CD4-positive, alpha-beta memory T cell (primary cell): ENCODE measurements at regions of chr2 and their contacts with region 1.

Region 1: GRCh38 chr2:165953655-165954606 is at the start of gene TTC21B:
- DNase-seq: peak; percentile 93 to 96 (median 94)
- H3K4me3 ChIP-seq: peak within 1 kb of the TSS; percentile 70 to 80
- H3K4me3 Mint-ChIP-seq: peak within 1 kb of the TSS in 4 of 8 donors; percentile 17 to 60 (median 47)
- H3K27ac ChIP-seq: peak within 1 kb of the TSS; percentile 79
- H3K27ac Mint-ChIP-seq: peak within 1 kb of the TSS in 3 of 7 donors; percentile 13 to 42 (median 36)
- H3K4me1 ChIP-seq: peaks cover 41% of the 10 kb centered on the region
- H3K4me1 Mint-ChIP-seq: peaks cover 7 to 19% (median 14%) of the 10 kb centered on the region in 4 donors
- H3K27me3 ChIP-seq: no peaks in the 10 kb centered on the region
- H3K27me3 Mint-ChIP-seq: no peaks in the 10 kb centered on the region
- total RNA-seq, gene TTC21B: 25.6 to 30.4 TPM

Region 2: DNA sequence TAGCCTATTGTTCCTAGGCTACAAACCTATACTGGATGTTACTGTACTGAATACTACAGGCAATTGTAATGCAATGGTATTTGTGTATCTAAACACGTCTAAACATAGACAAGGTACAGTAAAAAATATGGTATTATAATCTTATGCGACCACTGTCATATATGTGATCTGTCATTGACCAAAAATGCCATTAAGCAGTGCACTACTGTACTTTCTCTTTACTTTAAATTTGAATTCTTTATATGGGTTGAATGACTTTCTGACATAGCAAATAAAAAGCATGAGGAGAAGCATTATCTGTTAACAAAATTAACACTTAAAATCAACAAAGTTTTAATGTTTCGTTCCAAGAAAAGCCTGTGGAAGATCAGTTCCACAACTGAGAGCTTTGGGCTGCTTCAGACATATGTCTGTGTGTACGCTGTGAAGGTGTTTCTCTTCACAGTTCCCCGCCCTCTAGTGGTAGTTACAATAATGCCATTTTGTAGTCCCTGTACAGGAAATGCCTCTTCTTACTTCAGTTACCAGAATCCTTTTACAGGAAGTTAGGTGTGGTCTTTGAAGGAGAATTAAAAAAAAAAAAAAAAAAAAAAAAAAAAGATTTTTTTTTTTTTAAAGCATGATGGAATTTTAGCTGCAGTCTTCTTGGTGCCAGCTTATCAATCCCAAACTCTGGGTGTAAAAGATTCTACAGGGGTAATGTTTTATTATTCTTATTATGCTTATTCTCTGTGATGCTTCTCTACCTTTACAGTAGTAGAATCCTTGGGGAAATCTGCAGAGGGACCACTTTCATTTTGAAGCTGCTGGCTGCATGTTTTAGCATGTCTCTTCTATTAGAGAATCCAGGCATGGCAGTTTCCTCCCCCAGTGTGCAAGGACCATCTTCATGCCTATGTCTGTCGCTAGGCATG is 660.2 kb before region 1 on chr2:
- CTCF ChIA-PET with region 1: no interaction called
- POLR2A ChIA-PET with region 1: no interaction called
- intact Hi-C with region 1: loop called (anchors 10 kb)
- DNase-seq: peak; percentile 68 to 83 (median 75)
- H3K4me3 ChIP-seq: no peak overlapping the region
- H3K4me3 Mint-ChIP-seq: peak overlapping the region in 1 of 8 donors; percentile 11
- H3K27ac ChIP-seq: no peak overlapping the region
- H3K27ac Mint-ChIP-seq: peak overlapping the region in 2 of 7 donors; percentile 30 to 83
- H3K4me1 ChIP-seq: peaks cover 4% of the 10 kb centered on the region
- H3K4me1 Mint-ChIP-seq: peaks cover 0 to 4% (median 2%) of the 10 kb centered on the region in 4 donors
- H3K27me3 ChIP-seq: no peaks in the 10 kb centered on the region
- H3K27me3 Mint-ChIP-seq: peaks cover 6 to 7% of the 10 kb centered on the region in 2 donors

Region 3: DNA sequence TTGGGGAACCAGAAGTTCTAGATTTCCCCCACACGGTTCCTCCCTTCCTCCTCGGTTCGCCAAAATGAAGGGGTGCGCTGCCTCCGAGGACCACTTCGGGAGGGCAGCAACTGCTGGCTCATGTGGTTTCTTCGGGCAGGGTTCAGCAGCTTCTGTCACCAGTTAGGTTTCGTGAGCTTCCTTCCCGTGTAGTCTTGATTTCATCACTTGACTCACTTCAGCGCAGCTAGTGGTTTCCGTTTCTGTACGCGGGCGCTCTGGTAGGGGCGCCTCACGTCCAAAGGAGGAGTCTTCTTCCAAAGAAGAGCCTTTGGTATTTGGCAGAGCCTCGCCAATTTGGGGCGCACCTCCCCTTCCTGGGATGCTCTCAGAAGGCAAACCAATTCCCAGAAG is 159.4 kb before region 1 on chr2:
- CTCF ChIA-PET with region 1: no interaction called
- POLR2A ChIA-PET with region 1: interaction called, 7 read pairs
- intact Hi-C with region 1: loop called (anchors 10 kb)
- DNase-seq: peak; percentile 23 to 62 (median 49)
- H3K4me3 ChIP-seq: peak overlapping the region; percentile 28 to 60
- H3K4me3 Mint-ChIP-seq: peak overlapping the region; percentile 88 to 96 (median 94)
- H3K27ac ChIP-seq: no peak overlapping the region
- H3K27ac Mint-ChIP-seq: peak overlapping the region; percentile 68 to 92 (median 87)
- H3K4me1 ChIP-seq: peaks cover 6% of the 10 kb centered on the region
- H3K4me1 Mint-ChIP-seq: peaks cover 12 to 18% (median 15%) of the 10 kb centered on the region in 4 donors
- H3K27me3 ChIP-seq: no peaks in the 10 kb centered on the region
- H3K27me3 Mint-ChIP-seq: peaks cover 4 to 12% of the 10 kb centered on the region in 2 donors

Region 4: DNA sequence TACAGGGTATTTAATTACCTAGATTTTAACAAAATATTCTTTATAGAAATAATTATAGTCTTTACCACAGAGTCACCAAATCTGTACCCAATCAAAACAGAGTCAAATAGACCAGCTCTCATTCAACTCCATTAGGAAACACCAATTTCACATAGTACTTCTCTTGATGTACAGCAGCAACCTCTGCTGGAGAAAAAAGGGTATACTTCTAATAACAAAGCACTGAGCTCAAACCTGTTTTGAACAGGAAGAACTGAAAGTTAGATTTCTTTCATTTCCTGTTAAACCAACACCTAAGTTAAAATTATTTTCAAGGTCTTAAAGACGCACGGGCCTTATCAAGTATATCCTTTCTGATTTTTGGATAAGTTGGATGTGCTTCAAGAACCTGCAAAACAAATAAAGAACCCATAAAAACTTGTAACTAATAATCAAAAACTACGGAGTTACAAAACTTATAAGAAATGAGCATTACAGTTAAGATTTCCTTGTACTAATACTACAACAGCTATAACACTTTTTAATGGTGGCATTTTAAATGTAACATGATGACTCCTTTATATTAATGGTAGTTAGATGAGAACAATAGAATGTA is 79.4 kb before region 1 on chr2:
- CTCF ChIA-PET with region 1: interaction called, 3 read pairs
- POLR2A ChIA-PET with region 1: interaction called, 5 read pairs
- intact Hi-C with region 1: loop called (anchors 5 kb)
- DNase-seq: peak in 4 of 5 donors; percentile 51 to 62 (median 56)
- H3K4me3 ChIP-seq: no peak overlapping the region
- H3K4me3 Mint-ChIP-seq: peak overlapping the region in 3 of 8 donors; percentile 20 to 47 (median 29)
- H3K27ac ChIP-seq: no peak overlapping the region
- H3K27ac Mint-ChIP-seq: peak overlapping the region in 5 of 7 donors; percentile 5 to 79 (median 66)
- H3K4me1 ChIP-seq: peaks cover 14% of the 10 kb centered on the region
- H3K4me1 Mint-ChIP-seq: peaks cover 4 to 20% (median 8%) of the 10 kb centered on the region in 4 donors
- H3K27me3 ChIP-seq: no peaks in the 10 kb centered on the region
- H3K27me3 Mint-ChIP-seq: no peaks in the 10 kb centered on the region

Region 5: GRCh38 chr2:165941827-165942226 is 12.1 kb before region 1 on chr2:
- CTCF ChIA-PET with region 1: interaction called, 11 read pairs
- POLR2A ChIA-PET with region 1: interaction called, 14 read pairs
- intact Hi-C with region 1: no loop called
- DNase-seq: no peak
- H3K4me3 ChIP-seq: no peak overlapping the region
- H3K4me3 Mint-ChIP-seq: no peak overlapping the region
- H3K27ac ChIP-seq: no peak overlapping the region
- H3K27ac Mint-ChIP-seq: no peak overlapping the region
- H3K4me1 ChIP-seq: no peaks in the 10 kb centered on the region
- H3K4me1 Mint-ChIP-seq: peaks cover 3 to 20% (median 12%) of the 10 kb centered on the region in 4 donors
- H3K27me3 ChIP-seq: no peaks in the 10 kb centered on the region
- H3K27me3 Mint-ChIP-seq: no peaks in the 10 kb centered on the region

Region 6: DNA sequence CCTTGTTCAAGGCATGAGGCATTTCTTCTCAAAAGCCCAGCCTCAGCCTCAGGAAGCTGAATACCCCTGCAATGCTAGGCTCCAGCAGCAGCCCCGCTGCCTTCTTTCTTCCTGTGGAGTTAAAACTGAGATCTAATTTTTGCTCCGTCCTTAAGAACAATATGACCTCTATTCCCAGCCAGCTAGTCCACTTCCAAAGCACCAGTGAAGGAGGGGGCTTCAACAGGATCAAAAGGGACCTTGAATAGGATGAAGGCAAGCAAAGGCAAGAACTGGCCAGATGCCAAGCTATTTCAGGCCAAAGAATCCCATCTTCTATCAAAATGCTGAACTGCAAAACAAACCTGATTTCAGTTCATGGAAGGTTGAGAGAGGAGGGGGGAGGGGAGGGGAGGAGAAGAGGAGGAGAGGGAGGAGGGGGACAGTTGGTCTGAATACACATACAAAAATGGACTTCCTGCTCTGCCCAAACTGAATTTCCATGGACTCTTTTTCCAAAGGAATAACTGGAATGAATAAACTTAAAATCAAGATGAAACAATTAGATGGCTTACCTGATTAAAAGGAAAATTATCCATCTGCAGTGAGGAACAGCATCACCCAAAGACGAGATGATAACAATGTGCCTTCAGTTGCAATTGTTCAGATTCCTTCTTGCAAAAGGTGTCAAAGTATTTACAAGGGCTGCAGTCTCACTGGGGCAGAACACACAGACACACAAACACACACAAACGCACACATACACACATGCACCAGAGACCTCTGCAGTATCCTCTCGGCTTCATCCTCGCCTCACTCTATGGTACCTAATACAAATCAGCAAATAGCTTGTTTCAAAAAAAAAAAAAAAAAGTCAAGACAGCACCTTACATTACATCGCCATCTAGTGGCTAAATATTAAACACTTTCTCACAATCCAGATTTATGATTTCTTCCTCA is 173.6 kb after region 1 on chr2 and contains the start of gene SCN1A:
- CTCF ChIA-PET with region 1: interaction called, 24 read pairs
- POLR2A ChIA-PET with region 1: no interaction called
- intact Hi-C with region 1: loop called (anchors 1 kb)
- DNase-seq: peak in 4 of 5 donors; percentile 24 to 41 (median 36)
- H3K4me3 ChIP-seq: no peak within 1 kb of the TSS
- H3K4me3 Mint-ChIP-seq: no peak within 1 kb of the TSS
- H3K27ac ChIP-seq: no peak within 1 kb of the TSS
- H3K27ac Mint-ChIP-seq: peak within 1 kb of the TSS in 1 of 7 donors; percentile 42
- H3K4me1 ChIP-seq: no peaks in the 10 kb centered on the region
- H3K4me1 Mint-ChIP-seq: peaks cover 0 to 4% (median 3%) of the 10 kb centered on the region in 4 donors
- H3K27me3 ChIP-seq: no peaks in the 10 kb centered on the region
- H3K27me3 Mint-ChIP-seq: peaks cover 9 to 14% of the 10 kb centered on the region in 2 donors
- total RNA-seq, gene SCN1A: not detected